HCT116 (cell line): ENCODE measurements at regions of chr7 and their contacts with region 1.

Region 1: GRCh38 chr7:1733206-1733907 is 63.3 kb downstream of the ELFN1 start:
- DNase-seq: no peak
- ATAC-seq: peak; percentile 63
- H3K4me3 ChIP-seq: no peak overlapping the region
- H3K27ac ChIP-seq: no peak overlapping the region
- H3K4me1 ChIP-seq: peaks cover 5 to 10% of the 10 kb centered on the region in 2 experiments; a peak in 1 of 4 replicates
- H3K27me3 ChIP-seq: peaks cover 24% of the 10 kb centered on the region; the same call in 1 of the 2 replicates
- CTCF ChIP-seq: 0 out of 6 replicates have a peak, but pooled peaks of 1 of the 3 experiments have one; percentile 9
- POLR2A ChIP-seq: no peak
- RAD21 ChIP-seq: no peak

Region 2: GRCh38 chr7:1569833-1570633 is 163.3 kb before region 1 on chr7 and contains the start of gene PSMG3:
- CTCF ChIA-PET with region 1: no interaction called
- POLR2A ChIA-PET with region 1: interaction called, 3 read pairs
- RAD21 ChIA-PET with region 1: no interaction called
- intact Hi-C with region 1: loop called (anchors 10 kb)
- DNase-seq: peak; percentile 75
- ATAC-seq: peak; percentile 79
- H3K4me3 ChIP-seq: peak within 1 kb of the TSS; percentile 93 to 95
- H3K27ac ChIP-seq: peak within 1 kb of the TSS; percentile 98
- H3K4me1 ChIP-seq: peaks cover 38 to 49% of the 10 kb centered on the region in 2 experiments
- H3K27me3 ChIP-seq: no peaks in the 10 kb centered on the region
- CTCF ChIP-seq: peak in 2 of 3 experiments; percentile 26 to 30; a peak in 2 of 6 replicates
- POLR2A ChIP-seq: peak; percentile 70
- RAD21 ChIP-seq: no peak
- total RNA-seq, gene PSMG3: 60.9 TPM

Region 3: DNA sequence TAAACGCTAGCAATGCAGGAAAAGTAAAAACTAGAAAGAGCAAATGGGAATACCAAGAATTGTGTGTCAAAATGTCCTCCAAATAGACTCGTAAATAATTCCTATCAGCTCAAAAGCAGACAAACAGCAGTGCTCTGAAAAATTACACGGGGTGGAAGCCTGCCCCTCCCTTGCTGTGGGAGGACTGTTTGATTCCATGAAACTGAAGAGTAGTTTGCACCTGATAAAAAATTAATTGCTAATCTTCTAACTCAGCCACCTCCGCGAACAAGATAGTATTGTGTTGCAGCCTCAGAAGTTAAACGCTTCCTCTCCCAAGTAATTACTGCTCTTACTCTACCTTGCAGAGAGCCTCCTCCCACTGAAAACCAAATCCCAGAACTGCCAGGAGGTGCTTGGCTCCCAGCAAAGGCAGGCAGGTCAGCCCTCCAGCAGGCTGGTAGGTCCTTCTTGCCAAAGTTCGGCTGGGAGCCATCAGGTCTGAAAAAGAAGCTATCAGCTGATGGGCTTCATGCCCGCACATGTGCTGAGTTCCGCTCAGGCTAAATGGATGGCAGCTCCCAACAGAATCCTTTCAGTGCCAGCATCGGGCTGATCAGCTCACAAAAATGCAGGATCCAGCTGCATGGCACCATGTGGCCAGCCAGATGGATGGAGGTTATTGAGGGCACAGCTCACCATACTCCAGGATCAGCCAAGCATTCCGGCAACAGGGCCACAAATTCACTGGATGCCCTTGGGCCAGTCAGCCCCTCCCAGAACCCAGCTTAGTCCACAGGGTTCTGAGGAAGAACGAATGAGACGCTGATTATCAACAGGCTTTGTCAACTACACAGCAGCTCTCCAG is 462.3 kb after region 1 on chr7:
- CTCF ChIA-PET with region 1: no interaction called
- POLR2A ChIA-PET with region 1: no interaction called
- RAD21 ChIA-PET with region 1: no interaction called
- intact Hi-C with region 1: no loop called
- DNase-seq: no peak
- ATAC-seq: no peak
- H3K4me3 ChIP-seq: no peak overlapping the region
- H3K27ac ChIP-seq: no peak overlapping the region
- H3K4me1 ChIP-seq: no peaks in the 10 kb centered on the region
- H3K27me3 ChIP-seq: no peaks in the 10 kb centered on the region
- CTCF ChIP-seq: no peak
- POLR2A ChIP-seq: no peak
- RAD21 ChIP-seq: no peak